ENCODE measurements at regions of chr11 and their contacts with region 1.

Region 1: DNA sequence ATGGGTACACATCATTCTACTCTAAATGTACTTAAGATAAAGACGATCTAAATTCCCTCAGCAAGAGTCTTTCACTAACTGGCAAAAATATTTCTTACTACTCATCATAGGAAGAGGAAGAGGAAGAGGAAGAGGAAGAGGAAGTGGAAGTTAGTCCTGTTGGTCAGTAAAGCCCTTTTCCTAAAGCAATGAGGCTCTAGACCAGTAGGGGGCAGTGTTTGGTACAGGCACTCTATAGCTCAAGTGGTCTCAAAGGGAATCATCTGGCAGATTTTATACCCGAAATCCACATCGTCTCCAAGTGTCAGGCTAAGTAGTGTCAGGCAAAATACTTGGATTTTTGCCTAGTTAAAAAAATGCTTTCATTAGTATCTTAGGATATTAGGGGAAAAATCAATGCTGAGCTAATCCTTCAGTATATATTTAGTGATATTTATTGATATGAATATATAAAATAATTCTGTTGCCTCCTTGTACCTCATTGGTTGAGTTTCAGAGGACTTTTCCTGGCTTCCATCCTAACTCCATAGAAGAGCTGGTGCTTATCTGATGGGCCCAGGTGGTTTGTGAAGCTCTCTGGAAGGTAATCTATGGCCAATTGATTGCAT is 7.7 kb downstream of the BLID start:
- DNase-seq: peak; percentile 58
- ATAC-seq: peak; percentile 61; the same call in 1 of the 2 replicates
- H3K4me3 Mint-ChIP-seq: no peak overlapping the region
- H3K27ac Mint-ChIP-seq: no peak overlapping the region
- H3K4me1 Mint-ChIP-seq: peaks cover 11% of the 10 kb centered on the region
- H3K27me3 Mint-ChIP-seq: no peaks in the 10 kb centered on the region
- CTCF ChIP-seq: peak; percentile 70

Region 2: GRCh38 chr11:122202951-122203456 is 94.7 kb after region 1 on chr11:
- CTCF ChIA-PET with region 1: interaction called, 24 read pairs
- POLR2A ChIA-PET with region 1: no interaction called
- DNase-seq: peak; percentile 84
- ATAC-seq: peak; percentile 97
- H3K4me3 Mint-ChIP-seq: peak overlapping the region; percentile 39
- H3K27ac Mint-ChIP-seq: no peak overlapping the region
- H3K4me1 Mint-ChIP-seq: peaks cover 6% of the 10 kb centered on the region
- H3K27me3 Mint-ChIP-seq: no peaks in the 10 kb centered on the region
- CTCF ChIP-seq: peak; percentile 89

Measured in WTC11 (cell line).